CD8-positive, alpha-beta T cell (primary cell): ENCODE measurements at regions of chr5 and their contacts with region 1.

Region 1: GRCh38 chr5:142888469-142889085 is 118.4 kb downstream of the ARHGAP26 start:
- DNase-seq: peak in 2 of 9 experiments; percentile 45 to 55
- ATAC-seq: no peak
- H3K4me3 ChIP-seq: no peak overlapping the region
- H3K4me3 Mint-ChIP-seq: no peak overlapping the region
- H3K27ac ChIP-seq: no peak overlapping the region
- H3K27ac Mint-ChIP-seq: no peak overlapping the region
- H3K4me1 ChIP-seq: no peaks in the 10 kb centered on the region
- H3K4me1 Mint-ChIP-seq: peaks cover 18% of the 10 kb centered on the region
- H3K27me3 ChIP-seq: no peaks in the 10 kb centered on the region
- H3K27me3 Mint-ChIP-seq: no peaks in the 10 kb centered on the region
- CTCF ChIP-seq: peak; percentile 90

Region 2: GRCh38 chr5:141992349-141992963 is 896.1 kb before region 1 on chr5:
- CTCF ChIA-PET with region 1: no interaction called
- POLR2A ChIA-PET with region 1: no interaction called
- intact Hi-C with region 1: loop called in 1 of 2 experiments (anchors 10 kb)
- DNase-seq: peak; percentile 59 to 87 (median 81)
- ATAC-seq: peak; percentile 87
- H3K4me3 ChIP-seq: no peak overlapping the region
- H3K4me3 Mint-ChIP-seq: no peak overlapping the region
- H3K27ac ChIP-seq: no peak overlapping the region
- H3K27ac Mint-ChIP-seq: no peak overlapping the region
- H3K4me1 ChIP-seq: no peaks in the 10 kb centered on the region
- H3K4me1 Mint-ChIP-seq: peaks cover 5% of the 10 kb centered on the region
- H3K27me3 ChIP-seq: no peaks in the 10 kb centered on the region
- H3K27me3 Mint-ChIP-seq: no peaks in the 10 kb centered on the region
- CTCF ChIP-seq: peak; percentile 97

Region 3: GRCh38 chr5:142655339-142656267 is 233.0 kb before region 1 on chr5:
- CTCF ChIA-PET with region 1: interaction called, 41 read pairs
- POLR2A ChIA-PET with region 1: no interaction called
- intact Hi-C with region 1: loop called (anchors 1 to 2 kb)
- DNase-seq: peak; percentile 36 to 79 (median 69)
- ATAC-seq: peak; percentile 89
- H3K4me3 ChIP-seq: no peak overlapping the region
- H3K4me3 Mint-ChIP-seq: no peak overlapping the region
- H3K27ac ChIP-seq: no peak overlapping the region
- H3K27ac Mint-ChIP-seq: no peak overlapping the region
- H3K4me1 ChIP-seq: no peaks in the 10 kb centered on the region
- H3K4me1 Mint-ChIP-seq: peaks cover 3% of the 10 kb centered on the region
- H3K27me3 ChIP-seq: no peaks in the 10 kb centered on the region
- H3K27me3 Mint-ChIP-seq: peaks cover 16% of the 10 kb centered on the region
- CTCF ChIP-seq: peak; percentile 97

Region 4: GRCh38 chr5:142720641-142721271 is 167.8 kb before region 1 on chr5:
- CTCF ChIA-PET with region 1: interaction called, 258 read pairs
- POLR2A ChIA-PET with region 1: no interaction called
- intact Hi-C with region 1: no loop called
- DNase-seq: no peak
- ATAC-seq: no peak
- H3K4me3 ChIP-seq: no peak overlapping the region
- H3K4me3 Mint-ChIP-seq: no peak overlapping the region
- H3K27ac ChIP-seq: no peak overlapping the region
- H3K27ac Mint-ChIP-seq: no peak overlapping the region
- H3K4me1 ChIP-seq: no peaks in the 10 kb centered on the region
- H3K4me1 Mint-ChIP-seq: peaks cover 5% of the 10 kb centered on the region
- H3K27me3 ChIP-seq: no peaks in the 10 kb centered on the region
- H3K27me3 Mint-ChIP-seq: peaks cover 2% of the 10 kb centered on the region
- CTCF ChIP-seq: no peak

Region 5: GRCh38 chr5:142900927-142901326 is 12.3 kb after region 1 on chr5:
- CTCF ChIA-PET with region 1: interaction called, 27 read pairs
- POLR2A ChIA-PET with region 1: no interaction called
- intact Hi-C with region 1: no loop called
- DNase-seq: no peak
- ATAC-seq: no peak
- H3K4me3 ChIP-seq: no peak overlapping the region
- H3K4me3 Mint-ChIP-seq: no peak overlapping the region
- H3K27ac ChIP-seq: no peak overlapping the region
- H3K27ac Mint-ChIP-seq: no peak overlapping the region
- H3K4me1 ChIP-seq: no peaks in the 10 kb centered on the region
- H3K4me1 Mint-ChIP-seq: peaks cover 2% of the 10 kb centered on the region
- H3K27me3 ChIP-seq: no peaks in the 10 kb centered on the region
- H3K27me3 Mint-ChIP-seq: no peaks in the 10 kb centered on the region
- CTCF ChIP-seq: no peak

Region 6: DNA sequence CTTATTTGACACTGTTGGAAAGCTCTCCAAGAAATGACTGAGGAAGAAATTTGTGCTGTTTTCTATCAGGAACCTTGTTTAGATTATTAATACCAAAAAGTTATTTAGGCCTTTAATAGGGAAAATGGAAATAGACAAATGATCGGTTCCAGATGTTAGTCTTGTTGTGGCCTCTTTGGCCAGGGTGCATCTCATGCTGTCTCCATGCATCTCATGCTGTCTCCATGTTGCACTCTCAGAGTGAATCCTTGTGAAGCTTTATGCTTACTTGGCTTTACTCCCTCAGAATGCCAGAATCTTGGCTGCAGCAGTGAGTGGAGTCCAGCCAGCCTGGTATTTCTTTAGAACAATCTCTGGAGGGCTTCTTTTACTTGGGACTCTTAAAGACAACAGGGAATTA is 67.1 kb after region 1 on chr5:
- CTCF ChIA-PET with region 1: no interaction called
- POLR2A ChIA-PET with region 1: no interaction called
- intact Hi-C with region 1: no loop called
- DNase-seq: no peak
- ATAC-seq: no peak
- H3K4me3 ChIP-seq: no peak overlapping the region
- H3K4me3 Mint-ChIP-seq: no peak overlapping the region
- H3K27ac ChIP-seq: no peak overlapping the region
- H3K27ac Mint-ChIP-seq: no peak overlapping the region
- H3K4me1 ChIP-seq: no peaks in the 10 kb centered on the region
- H3K4me1 Mint-ChIP-seq: peaks cover 37% of the 10 kb centered on the region
- H3K27me3 ChIP-seq: no peaks in the 10 kb centered on the region
- H3K27me3 Mint-ChIP-seq: no peaks in the 10 kb centered on the region
- CTCF ChIP-seq: no peak